ENCODE measurements at regions of chr9 and their contacts with region 1.

Region 1: DNA sequence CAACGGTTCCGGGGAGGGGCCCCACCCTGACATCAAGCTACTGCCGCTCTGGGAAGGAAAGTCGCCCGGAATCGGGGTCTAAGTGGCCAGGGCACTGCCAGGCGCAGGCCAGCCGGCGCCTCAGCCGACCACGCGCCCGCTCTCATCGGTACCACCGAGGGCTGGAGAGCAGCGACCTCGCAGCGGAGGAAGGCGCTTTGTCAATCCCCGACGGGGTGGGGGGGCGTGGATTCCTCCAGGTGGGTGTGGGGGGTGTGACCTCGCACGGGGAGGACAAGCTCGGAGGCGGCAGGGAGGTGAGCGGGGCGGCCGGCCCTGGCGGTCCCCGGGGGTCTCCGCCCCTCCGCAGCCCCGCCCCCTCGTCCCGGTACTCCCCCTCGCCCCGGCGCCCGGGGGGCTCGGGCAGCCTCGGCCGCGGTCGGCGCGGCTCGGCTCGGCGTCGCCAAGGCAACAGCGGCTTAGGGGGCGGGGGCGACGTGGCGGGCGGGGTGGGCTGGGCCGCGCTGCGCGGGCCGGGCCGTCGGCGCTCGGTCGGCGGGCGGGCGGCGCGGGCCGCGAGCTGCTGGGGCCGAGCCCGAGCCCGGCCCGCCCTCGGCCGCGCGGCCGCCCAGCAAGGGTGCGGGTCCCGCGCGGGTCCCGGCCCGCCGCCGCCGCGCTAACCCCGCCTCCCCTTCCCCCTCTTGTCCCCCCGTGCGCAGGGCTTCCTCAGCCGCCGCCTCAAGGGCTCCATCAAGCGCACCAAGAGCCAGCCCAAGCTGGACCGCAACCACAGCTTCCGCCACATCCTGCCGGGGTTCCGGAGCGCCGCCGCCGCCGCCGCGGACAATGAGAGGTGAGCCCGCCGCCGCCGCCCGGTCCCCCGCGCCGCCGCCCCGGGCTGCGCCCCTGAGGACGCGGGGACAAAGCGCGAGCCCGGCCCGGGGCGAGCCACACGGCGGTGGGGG is 47.5 kb downstream of the DAB2IP start:
- DNase-seq: peak in 2 of 4 experiments; percentile 28 to 32
- ATAC-seq: no peak
- H3K4me3 ChIP-seq: no peak overlapping the region
- H3K27ac ChIP-seq: no peak overlapping the region
- H3K4me1 ChIP-seq: peaks cover 0 to 5% of the 10 kb centered on the region in 2 experiments; a peak in 1 of 5 replicates
- H3K27me3 ChIP-seq: peaks cover 17 to 58% of the 10 kb centered on the region in 2 experiments
- CTCF ChIP-seq: no peak
- EP300 ChIP-seq: no peak
- POLR2A ChIP-seq: no peak
- RAD21 ChIP-seq: no peak

Region 2: DNA sequence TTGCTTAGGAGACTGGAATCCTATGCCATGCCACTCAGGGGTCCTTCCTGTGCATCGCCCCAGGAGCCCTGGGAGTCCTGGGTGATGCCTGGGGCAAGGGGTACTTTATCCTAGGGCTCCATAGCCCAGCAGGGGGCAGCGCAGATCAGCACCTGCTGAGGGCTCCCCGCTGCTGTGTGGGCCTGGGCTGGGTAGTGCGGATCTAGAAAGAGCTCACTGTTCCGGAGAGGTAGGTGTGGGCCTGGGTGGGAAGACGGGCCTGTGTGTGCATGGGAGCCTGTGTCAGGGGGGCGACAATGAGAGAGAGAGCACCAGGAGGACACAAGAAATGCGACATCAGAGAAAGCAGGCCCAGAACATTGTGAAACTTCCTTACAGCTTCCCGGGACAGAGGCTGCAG is 58.8 kb before region 1 on chr9:
- CTCF ChIA-PET with region 1: no interaction called
- POLR2A ChIA-PET with region 1: no interaction called
- in situ Hi-C with region 1: no loop called
- intact Hi-C with region 1: loop called (anchors 1 kb)
- DNase-seq: peak; percentile 55 to 71 (median 70)
- ATAC-seq: peak; percentile 96
- H3K4me3 ChIP-seq: no peak overlapping the region
- H3K27ac ChIP-seq: no peak overlapping the region
- H3K4me1 ChIP-seq: no peaks in the 10 kb centered on the region
- H3K27me3 ChIP-seq: peaks cover 0 to 24% of the 10 kb centered on the region in 2 experiments; a peak in 3 of 5 replicates
- CTCF ChIP-seq: peak; percentile 65 to 69 (median 65)
- EP300 ChIP-seq: no peak
- POLR2A ChIP-seq: no peak
- RAD21 ChIP-seq: peak; percentile 44 to 73

Region 3: DNA sequence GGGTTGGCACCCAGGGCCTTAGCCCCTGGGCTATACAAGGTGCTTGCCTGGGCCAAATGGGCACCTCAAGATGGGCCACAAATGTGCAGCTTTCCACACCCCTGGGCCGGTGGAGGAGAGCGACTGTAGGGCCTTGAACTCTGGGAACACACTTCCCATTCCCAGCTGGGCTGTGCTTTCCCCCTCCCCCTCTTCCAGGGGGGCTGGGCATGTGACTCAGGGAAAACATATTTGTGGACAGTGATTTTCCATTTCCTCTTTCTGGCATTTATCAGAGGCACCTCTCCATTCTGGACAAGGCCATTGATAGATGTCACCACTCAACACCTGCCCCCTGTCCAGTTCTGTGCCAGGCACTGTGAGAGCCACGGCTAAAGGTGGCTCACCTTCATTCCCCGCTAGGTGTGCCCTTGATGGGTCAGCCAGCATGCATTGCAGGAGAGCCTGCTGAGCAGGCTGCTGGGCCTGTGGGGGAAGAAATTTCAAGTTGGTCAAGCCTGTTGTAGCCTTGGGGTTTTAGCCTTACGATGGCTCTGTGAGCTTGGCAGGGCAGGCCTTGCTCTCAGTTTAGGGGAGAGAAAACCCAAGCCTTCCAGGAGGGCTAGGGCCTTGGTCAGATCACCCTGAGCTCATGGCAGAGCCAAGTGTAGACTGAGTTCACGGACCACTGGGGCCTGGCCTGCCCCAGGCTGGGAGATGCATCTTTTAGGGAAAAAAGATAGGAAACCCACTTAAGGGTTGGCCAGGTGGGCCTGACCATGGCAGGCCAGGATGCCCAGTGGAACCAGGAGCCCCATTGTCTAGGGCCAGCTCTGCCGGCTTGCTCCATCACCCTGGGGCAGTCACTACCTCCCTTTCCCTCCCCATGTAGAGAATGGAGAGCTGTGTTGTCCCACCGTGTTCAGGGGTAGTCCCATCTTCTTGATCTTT is 66.4 kb after region 1 on chr9:
- CTCF ChIA-PET with region 1: no interaction called
- POLR2A ChIA-PET with region 1: no interaction called
- in situ Hi-C with region 1: no loop called
- intact Hi-C with region 1: no loop called
- DNase-seq: no peak
- ATAC-seq: no peak
- H3K4me3 ChIP-seq: no peak overlapping the region
- H3K27ac ChIP-seq: no peak overlapping the region
- H3K4me1 ChIP-seq: no peaks in the 10 kb centered on the region
- H3K27me3 ChIP-seq: peaks cover 13 to 95% of the 10 kb centered on the region in 2 experiments
- CTCF ChIP-seq: no peak
- EP300 ChIP-seq: no peak
- POLR2A ChIP-seq: no peak
- RAD21 ChIP-seq: no peak

Region 4: DNA sequence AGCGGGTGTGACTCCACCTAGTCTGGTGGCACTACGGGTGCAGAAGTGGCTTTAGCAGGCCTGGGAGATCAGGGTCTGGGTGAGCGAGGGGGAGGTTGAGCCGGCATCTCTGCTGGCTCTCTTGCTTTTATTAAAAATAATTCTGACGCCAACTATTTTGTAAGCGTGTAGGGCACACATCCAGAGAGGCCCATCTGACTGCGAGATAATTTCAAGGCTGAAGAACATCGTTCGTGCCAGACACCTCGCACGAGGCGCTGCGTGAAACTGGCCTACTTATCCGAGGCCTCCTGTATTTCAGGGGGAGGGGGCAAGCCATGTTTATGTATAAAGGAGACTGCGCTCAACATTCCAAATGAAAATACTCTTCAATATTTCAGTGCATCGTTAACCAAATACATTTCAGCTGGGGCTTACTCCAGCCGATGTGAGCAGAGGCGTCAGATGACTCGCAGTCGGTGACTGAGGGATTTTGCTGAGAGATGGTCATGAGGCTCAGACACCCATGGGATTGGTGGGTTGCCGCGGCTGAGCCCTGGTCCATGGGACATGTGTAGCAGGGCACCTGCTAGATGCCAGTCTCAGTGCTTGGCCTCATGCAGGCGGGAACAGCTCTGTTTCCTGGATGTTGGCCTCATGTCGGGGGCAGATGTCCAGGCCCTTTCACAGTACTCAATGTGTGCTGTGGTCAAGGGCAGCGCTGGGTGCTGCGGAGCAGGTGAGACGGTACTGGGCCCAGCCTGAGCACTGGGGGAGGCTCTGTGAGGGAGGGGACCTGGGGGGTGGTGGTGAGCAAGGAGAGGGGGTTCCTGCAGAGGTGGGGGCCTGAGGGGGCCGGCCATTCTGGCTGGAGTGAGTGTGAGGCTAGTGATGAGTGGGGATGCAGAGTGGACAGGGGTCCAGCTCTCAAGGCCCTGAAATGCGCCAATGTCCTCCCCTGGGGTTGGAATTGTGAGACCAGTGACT is 154.0 kb after region 1 on chr9:
- CTCF ChIA-PET with region 1: no interaction called
- POLR2A ChIA-PET with region 1: no interaction called
- in situ Hi-C with region 1: no loop called
- intact Hi-C with region 1: loop called (anchors 10 kb)
- DNase-seq: no peak
- ATAC-seq: no peak
- H3K4me3 ChIP-seq: no peak overlapping the region
- H3K27ac ChIP-seq: no peak overlapping the region
- H3K4me1 ChIP-seq: no peaks in the 10 kb centered on the region; a peak in 1 of 5 replicates
- H3K27me3 ChIP-seq: peaks cover 8 to 47% of the 10 kb centered on the region in 2 experiments
- CTCF ChIP-seq: no peak
- EP300 ChIP-seq: no peak
- POLR2A ChIP-seq: no peak
- RAD21 ChIP-seq: no peak

Region 5: GRCh38 chr9:121921444-121921843 is 222.5 kb after region 1 on chr9:
- CTCF ChIA-PET with region 1: no interaction called
- POLR2A ChIA-PET with region 1: no interaction called
- in situ Hi-C with region 1: no loop called
- intact Hi-C with region 1: no loop called
- DNase-seq: no peak
- ATAC-seq: no peak
- H3K4me3 ChIP-seq: no peak overlapping the region
- H3K27ac ChIP-seq: no peak overlapping the region
- H3K4me1 ChIP-seq: no peaks in the 10 kb centered on the region
- H3K27me3 ChIP-seq: peaks cover 4 to 11% of the 10 kb centered on the region in 2 experiments; a peak in 3 of 5 replicates
- CTCF ChIP-seq: no peak
- EP300 ChIP-seq: no peak
- POLR2A ChIP-seq: no peak
- RAD21 ChIP-seq: no peak